Esophagus muscularis mucosa (tissue), 4 donors: ENCODE measurements at regions of chr7 and their contacts with region 1.

Region 1: DNA sequence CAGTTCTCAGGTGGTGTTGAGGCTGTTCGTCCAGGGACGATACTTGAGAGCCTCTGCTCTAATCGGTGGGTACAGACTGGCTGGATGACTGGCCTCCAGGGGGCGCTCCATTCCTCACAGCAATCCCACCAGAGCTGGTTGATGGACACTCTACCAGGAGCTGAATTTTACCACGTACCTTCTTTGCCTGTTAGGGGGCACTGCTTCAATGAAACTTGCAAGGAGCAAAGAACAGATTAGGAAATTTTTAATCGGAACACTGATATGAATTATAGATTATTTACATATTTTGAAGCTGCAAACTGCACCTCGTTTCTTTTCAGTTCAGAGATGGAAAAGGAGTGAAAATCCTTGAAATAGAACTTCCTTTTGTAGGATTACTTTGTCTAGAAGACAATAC is 44.9 kb downstream of the KBTBD2 start:
- DNase-seq: peak; percentile 96
- H3K4me3 ChIP-seq: peak overlapping the region in 1 of 4 donors; percentile 7
- H3K27ac ChIP-seq: no peak overlapping the region
- H3K4me1 ChIP-seq: peaks cover 4 to 9% (median 7%) of the 10 kb centered on the region in 4 donors
- H3K27me3 ChIP-seq: no peaks in the 10 kb centered on the region
- CTCF ChIP-seq: peak; percentile 89 to 93 (median 92)
- EP300 ChIP-seq: no peak
- POLR2A ChIP-seq: no peak

Region 2: DNA sequence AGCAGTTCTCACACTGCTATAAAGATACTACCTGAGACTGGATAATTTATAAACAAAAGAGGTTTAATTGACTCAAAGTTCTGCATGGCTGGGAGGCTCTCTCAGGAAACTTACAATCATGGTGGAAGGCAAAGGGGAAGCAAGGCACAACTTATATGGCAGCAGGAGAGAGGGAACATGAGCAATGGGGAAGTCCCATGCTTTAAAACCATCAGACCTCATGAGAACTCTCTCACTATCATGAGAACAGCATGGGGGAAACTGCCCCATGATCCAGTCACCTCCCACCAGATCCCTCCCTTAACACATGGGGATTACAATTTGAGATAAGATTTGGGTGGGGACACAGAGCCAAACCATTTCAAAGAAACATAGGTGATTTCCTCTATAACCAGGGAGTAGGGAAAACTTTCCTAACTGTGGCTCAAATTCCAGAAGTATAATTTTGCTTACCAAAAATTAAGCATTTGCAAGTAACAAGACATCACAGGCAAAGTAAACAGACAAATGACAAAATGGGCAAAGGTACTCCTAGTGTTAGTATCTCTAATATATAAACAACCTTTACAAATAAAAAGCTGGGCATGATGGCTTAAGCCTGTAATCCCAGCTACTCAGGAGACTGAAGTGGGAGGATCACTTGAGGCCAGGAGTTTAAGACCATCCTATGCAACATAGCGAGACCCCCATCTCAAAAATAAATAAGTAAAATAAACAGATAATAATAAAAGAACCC is 43.1 kb before region 1 on chr7:
- intact Hi-C with region 1: no loop called
- DNase-seq: no peak
- H3K4me3 ChIP-seq: no peak overlapping the region
- H3K27ac ChIP-seq: no peak overlapping the region
- H3K4me1 ChIP-seq: peaks cover 0 to 5% (median 2%) of the 10 kb centered on the region in 4 donors
- H3K27me3 ChIP-seq: no peaks in the 10 kb centered on the region
- CTCF ChIP-seq: no peak
- EP300 ChIP-seq: no peak
- POLR2A ChIP-seq: no peak

Region 3: GRCh38 chr7:32891800-32892520 is 45.3 kb after region 1 on chr7:
- intact Hi-C with region 1: loop called (anchors 5 kb)
- DNase-seq: peak; percentile 99
- H3K4me3 ChIP-seq: peak overlapping the region; percentile 95 to 99 (median 98)
- H3K27ac ChIP-seq: peak overlapping the region; percentile 99 to 100 (median 100)
- H3K4me1 ChIP-seq: peaks cover 38 to 63% (median 57%) of the 10 kb centered on the region in 4 donors
- H3K27me3 ChIP-seq: no peaks in the 10 kb centered on the region
- CTCF ChIP-seq: no peak
- EP300 ChIP-seq: no peak
- POLR2A ChIP-seq: peak; percentile 74

Region 4: DNA sequence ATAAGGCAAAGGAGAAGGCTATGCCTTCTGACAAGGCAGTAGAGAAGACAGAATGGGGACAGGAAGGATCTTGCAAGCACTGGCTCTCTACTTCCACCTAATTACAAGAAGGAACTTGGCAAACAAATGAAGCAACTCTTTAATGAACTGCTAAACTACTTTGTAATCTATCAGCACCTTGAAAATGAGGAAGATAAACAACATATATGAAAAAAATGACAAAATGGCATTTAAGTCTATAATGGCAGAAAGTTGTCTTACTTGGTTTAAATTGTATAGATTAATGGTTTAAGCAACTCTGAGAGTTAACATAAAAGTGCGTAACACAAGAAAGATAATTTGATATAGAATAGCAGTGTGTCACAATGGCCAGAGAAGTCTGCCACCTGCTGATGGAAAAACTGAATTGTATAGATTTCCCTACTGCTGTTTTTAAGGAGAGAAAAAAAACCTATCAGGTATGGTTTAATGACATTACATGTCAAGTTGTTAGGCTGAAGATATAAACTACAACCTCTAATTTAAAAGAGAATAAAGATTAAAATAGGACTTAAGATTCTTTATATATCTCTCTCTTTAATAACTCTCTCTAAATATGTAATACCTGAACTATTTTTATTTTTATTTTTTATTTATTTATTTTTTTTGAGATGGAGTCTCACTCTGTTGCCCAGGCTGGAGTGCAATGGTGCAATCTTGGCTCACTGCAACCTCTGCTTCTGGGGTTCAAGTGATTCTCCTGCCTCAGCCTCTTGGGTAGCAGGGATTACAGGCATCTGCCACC is 204.0 kb after region 1 on chr7:
- intact Hi-C with region 1: loop called (anchors 10 kb)
- DNase-seq: no peak
- H3K4me3 ChIP-seq: peak overlapping the region; percentile 4 to 31 (median 19)
- H3K27ac ChIP-seq: peak overlapping the region; percentile 48 to 62 (median 58)
- H3K4me1 ChIP-seq: peaks cover 11 to 59% (median 45%) of the 10 kb centered on the region in 4 donors
- H3K27me3 ChIP-seq: no peaks in the 10 kb centered on the region
- CTCF ChIP-seq: peak; percentile 54 to 69 (median 62)
- EP300 ChIP-seq: no peak
- POLR2A ChIP-seq: no peak

Region 5: DNA sequence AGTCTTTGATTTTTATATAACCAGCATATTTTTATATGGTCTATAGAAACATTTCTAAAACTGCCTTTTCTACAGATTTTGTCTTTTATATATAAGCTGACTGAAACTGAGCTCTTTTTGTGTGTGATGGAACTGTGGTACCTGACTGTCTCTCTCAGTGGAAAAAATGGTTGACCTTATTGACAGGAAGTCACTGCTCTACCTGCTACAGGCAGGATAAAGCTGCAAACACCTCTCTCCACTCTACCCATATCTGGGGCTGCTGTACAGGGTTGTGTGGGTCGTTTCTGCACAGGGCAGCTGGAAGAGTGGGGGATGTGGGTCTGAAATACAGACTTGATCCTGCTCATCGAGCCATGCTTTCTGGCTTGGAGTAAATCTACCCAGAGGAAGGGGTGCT is 331.2 kb after region 1 on chr7:
- intact Hi-C with region 1: no loop called
- DNase-seq: no peak
- H3K4me3 ChIP-seq: no peak overlapping the region
- H3K27ac ChIP-seq: no peak overlapping the region
- H3K4me1 ChIP-seq: no peaks in the 10 kb centered on the region
- H3K27me3 ChIP-seq: no peaks in the 10 kb centered on the region
- CTCF ChIP-seq: no peak
- EP300 ChIP-seq: no peak
- POLR2A ChIP-seq: no peak